A673 (cell line): ENCODE measurements at regions of chr7 and their contacts with region 1.

Region 1: DNA sequence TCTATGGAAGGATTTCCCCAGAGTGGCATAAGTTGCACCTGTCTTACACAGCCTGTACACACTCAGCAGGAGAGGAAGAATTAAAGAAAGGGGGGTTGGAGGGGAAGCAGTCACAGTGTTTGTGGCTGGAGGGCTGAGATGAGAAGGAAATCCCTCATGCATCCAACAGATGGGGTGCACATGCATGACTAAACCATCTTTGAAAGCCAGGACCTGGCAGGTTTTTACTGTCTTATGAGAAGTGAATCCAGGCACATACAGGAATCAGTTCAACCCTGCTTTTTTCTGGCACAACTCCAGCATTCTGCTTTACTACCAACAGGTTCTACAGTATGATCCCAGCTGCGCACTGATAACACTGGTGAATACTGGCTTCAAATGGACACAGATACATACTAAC is 107.7 kb downstream of the CACNA2D1 start:
- DNase-seq: peak; percentile 76
- H3K4me3 ChIP-seq: no peak overlapping the region
- H3K27ac ChIP-seq: no peak overlapping the region
- H3K4me1 ChIP-seq: peaks cover 28% of the 10 kb centered on the region
- H3K27me3 ChIP-seq: no peaks in the 10 kb centered on the region
- CTCF ChIP-seq: peak; percentile 30; the same call in 1 of the 2 replicates

Region 2: DNA sequence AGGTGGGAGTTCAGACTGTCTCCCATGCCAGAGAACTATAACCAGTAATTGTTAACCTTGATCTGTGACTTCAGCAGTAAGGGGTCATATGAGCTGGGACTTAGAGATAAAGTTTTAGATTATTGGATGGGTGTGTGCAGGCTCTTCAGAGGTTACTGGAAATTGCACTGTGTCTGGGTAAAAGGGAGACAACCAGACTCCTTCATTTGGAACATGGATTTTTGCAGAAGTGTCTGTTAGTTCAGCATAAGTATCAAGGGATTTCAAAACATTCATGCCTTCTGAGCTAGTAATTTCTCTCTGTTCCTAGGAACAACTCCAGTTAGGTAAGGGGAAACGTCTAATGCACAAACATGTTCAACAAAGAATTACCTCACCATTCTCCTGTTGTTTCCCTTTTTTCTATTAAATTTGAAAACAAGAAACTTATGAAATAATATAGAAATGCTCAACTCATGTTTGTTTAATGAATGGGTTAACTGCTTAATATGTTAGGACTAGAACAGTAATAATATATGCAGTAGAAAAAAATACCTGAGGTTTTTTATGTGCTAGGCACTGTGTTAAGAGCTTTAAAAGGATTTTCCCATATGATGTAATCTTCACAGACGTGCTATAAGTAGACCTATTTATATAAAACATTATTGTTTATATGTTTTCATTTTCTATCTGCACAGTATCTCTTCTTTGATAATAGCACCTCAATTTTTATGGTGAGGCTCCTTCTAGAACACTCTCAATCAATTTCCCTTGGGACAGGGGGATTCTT is 125.3 kb before region 1 on chr7:
- CTCF ChIA-PET with region 1: no interaction called
- POLR2A ChIA-PET with region 1: no interaction called
- intact Hi-C with region 1: no loop called
- DNase-seq: no peak
- H3K4me3 ChIP-seq: no peak overlapping the region
- H3K27ac ChIP-seq: no peak overlapping the region
- H3K4me1 ChIP-seq: peaks cover 13% of the 10 kb centered on the region
- H3K27me3 ChIP-seq: no peaks in the 10 kb centered on the region
- CTCF ChIP-seq: no peak

Region 3: GRCh38 chr7:82319674-82320118 is 16.2 kb before region 1 on chr7:
- CTCF ChIA-PET with region 1: no interaction called
- POLR2A ChIA-PET with region 1: no interaction called
- intact Hi-C with region 1: loop called (anchors 2 kb)
- DNase-seq: peak; percentile 96
- H3K4me3 ChIP-seq: no peak overlapping the region
- H3K27ac ChIP-seq: peak overlapping the region; percentile 21
- H3K4me1 ChIP-seq: peaks cover 36% of the 10 kb centered on the region
- H3K27me3 ChIP-seq: no peaks in the 10 kb centered on the region
- CTCF ChIP-seq: no peak

Region 4: DNA sequence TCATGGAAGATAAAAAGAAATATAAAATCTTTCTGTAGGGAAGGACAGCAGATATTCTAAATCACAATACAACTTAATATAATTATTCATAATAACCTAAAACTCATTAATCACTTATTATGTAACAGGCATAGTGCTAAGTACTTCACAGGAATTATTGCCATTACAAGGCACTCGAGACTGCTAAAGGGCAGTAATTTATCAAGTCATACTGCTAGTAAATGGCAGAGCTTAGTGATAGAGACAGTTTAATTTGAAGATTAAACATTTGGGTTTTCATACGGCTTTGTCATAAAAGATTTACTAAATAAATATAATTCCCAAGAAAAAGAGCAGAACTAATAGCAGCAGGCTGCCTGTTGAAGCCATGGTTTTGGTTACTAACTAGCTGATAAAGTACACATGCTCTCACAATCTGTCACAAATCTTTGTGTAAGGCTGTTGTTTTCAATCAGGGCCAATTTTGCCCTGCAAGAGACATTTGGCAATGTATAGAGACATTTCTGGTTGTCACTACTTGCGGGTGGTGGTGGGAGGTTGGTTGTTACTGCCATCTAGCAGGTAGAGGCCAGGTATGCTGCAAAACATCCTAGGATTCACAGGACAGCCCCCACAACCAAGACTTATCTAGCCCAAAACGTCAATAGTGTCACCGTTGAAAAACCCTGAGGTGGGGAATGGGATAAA is 341.0 kb after region 1 on chr7:
- CTCF ChIA-PET with region 1: no interaction called
- POLR2A ChIA-PET with region 1: no interaction called
- intact Hi-C with region 1: no loop called
- DNase-seq: no peak
- H3K4me3 ChIP-seq: no peak overlapping the region
- H3K27ac ChIP-seq: no peak overlapping the region
- H3K4me1 ChIP-seq: no peaks in the 10 kb centered on the region
- H3K27me3 ChIP-seq: no peaks in the 10 kb centered on the region
- CTCF ChIP-seq: no peak; the same call in 1 of the 2 replicates